ENCODE measurements at regions of chr7 and their contacts with region 1.

Region 1: GRCh38 chr7:76166404-76167255 is 35.1 kb upstream of the SRRM3 start:
- DNase-seq: peak; percentile 88 to 92 (median 92)
- H3K4me3 ChIP-seq: peak overlapping the region; percentile 47 to 75
- H3K4me3 Mint-ChIP-seq: peak overlapping the region; percentile 87 to 93 (median 90)
- H3K27ac ChIP-seq: peak overlapping the region; percentile 66
- H3K27ac Mint-ChIP-seq: peak overlapping the region; percentile 90 to 97 (median 95)
- H3K4me1 ChIP-seq: peaks cover 6% of the 10 kb centered on the region
- H3K4me1 Mint-ChIP-seq: peaks cover 2 to 8% (median 5%) of the 10 kb centered on the region in 4 donors
- H3K27me3 ChIP-seq: no peaks in the 10 kb centered on the region
- H3K27me3 Mint-ChIP-seq: no peaks in the 10 kb centered on the region

Region 2: GRCh38 chr7:76047811-76048667 is 118.6 kb before region 1 on chr7 and contains the starts of genes MDH2 and STYXL1:
- CTCF ChIA-PET with region 1: no interaction called
- POLR2A ChIA-PET with region 1: interaction called, 15 read pairs
- intact Hi-C with region 1: no loop called
- DNase-seq: peak; percentile 81 to 88 (median 83)
- H3K4me3 ChIP-seq: peak within 1 kb of the TSS; percentile 42 to 92
- H3K4me3 Mint-ChIP-seq: peak within 1 kb of the TSS; percentile 95 to 99 (median 98)
- H3K27ac ChIP-seq: peak within 1 kb of the TSS; percentile 92
- H3K27ac Mint-ChIP-seq: peak within 1 kb of the TSS; percentile 91 to 98 (median 98)
- H3K4me1 ChIP-seq: peaks cover 44% of the 10 kb centered on the region
- H3K4me1 Mint-ChIP-seq: peaks cover 36 to 71% (median 48%) of the 10 kb centered on the region in 4 donors
- H3K27me3 ChIP-seq: no peaks in the 10 kb centered on the region
- H3K27me3 Mint-ChIP-seq: no peaks in the 10 kb centered on the region
- total RNA-seq, gene MDH2: 79.8 to 80.1 TPM
- total RNA-seq, gene STYXL1: 18.9 to 23.9 TPM

Region 3: GRCh38 chr7:76179686-76180085 is 13.1 kb after region 1 on chr7:
- CTCF ChIA-PET with region 1: interaction called, 30 read pairs
- POLR2A ChIA-PET with region 1: interaction called, 16 read pairs
- intact Hi-C with region 1: no loop called
- DNase-seq: no peak
- H3K4me3 ChIP-seq: no peak overlapping the region
- H3K4me3 Mint-ChIP-seq: no peak overlapping the region
- H3K27ac ChIP-seq: no peak overlapping the region
- H3K27ac Mint-ChIP-seq: no peak overlapping the region
- H3K4me1 ChIP-seq: no peaks in the 10 kb centered on the region
- H3K4me1 Mint-ChIP-seq: peaks cover 0 to 6% (median 4%) of the 10 kb centered on the region in 4 donors
- H3K27me3 ChIP-seq: no peaks in the 10 kb centered on the region
- H3K27me3 Mint-ChIP-seq: peaks cover 0 to 3% of the 10 kb centered on the region in 2 donors

Region 4: GRCh38 chr7:76201730-76202665 is 35.4 kb after region 1 on chr7 and contains the start of gene SRRM3:
- CTCF ChIA-PET with region 1: interaction called, 3 read pairs
- POLR2A ChIA-PET with region 1: no interaction called
- intact Hi-C with region 1: loop called (anchors 1 kb)
- DNase-seq: peak; percentile 71 to 86 (median 81)
- H3K4me3 ChIP-seq: no peak within 1 kb of the TSS
- H3K4me3 Mint-ChIP-seq: no peak within 1 kb of the TSS
- H3K27ac ChIP-seq: no peak within 1 kb of the TSS
- H3K27ac Mint-ChIP-seq: no peak within 1 kb of the TSS
- H3K4me1 ChIP-seq: no peaks in the 10 kb centered on the region
- H3K4me1 Mint-ChIP-seq: no peaks in the 10 kb centered on the region
- H3K27me3 ChIP-seq: no peaks in the 10 kb centered on the region
- H3K27me3 Mint-ChIP-seq: peaks cover 18 to 21% of the 10 kb centered on the region in 2 donors
- total RNA-seq, gene SRRM3: not detected

Region 5: GRCh38 chr7:76509931-76510877 is 343.6 kb after region 1 on chr7 and contains the start of gene UPK3B:
- CTCF ChIA-PET with region 1: no interaction called
- POLR2A ChIA-PET with region 1: no interaction called
- intact Hi-C with region 1: no loop called
- DNase-seq: no peak
- H3K4me3 ChIP-seq: no peak within 1 kb of the TSS
- H3K4me3 Mint-ChIP-seq: no peak within 1 kb of the TSS
- H3K27ac ChIP-seq: no peak within 1 kb of the TSS
- H3K27ac Mint-ChIP-seq: no peak within 1 kb of the TSS
- H3K4me1 ChIP-seq: no peaks in the 10 kb centered on the region
- H3K4me1 Mint-ChIP-seq: peaks cover 0 to 2% (median under 1%) of the 10 kb centered on the region in 4 donors
- H3K27me3 ChIP-seq: no peaks in the 10 kb centered on the region
- H3K27me3 Mint-ChIP-seq: no peaks in the 10 kb centered on the region
- total RNA-seq, gene UPK3B: 2.7 to 3.3 TPM

Measured in CD4-positive, alpha-beta memory T cell (primary cell).